GM12878 (cell line): ENCODE measurements at regions of chr7 and their contacts with region 1.

Region 1: DNA sequence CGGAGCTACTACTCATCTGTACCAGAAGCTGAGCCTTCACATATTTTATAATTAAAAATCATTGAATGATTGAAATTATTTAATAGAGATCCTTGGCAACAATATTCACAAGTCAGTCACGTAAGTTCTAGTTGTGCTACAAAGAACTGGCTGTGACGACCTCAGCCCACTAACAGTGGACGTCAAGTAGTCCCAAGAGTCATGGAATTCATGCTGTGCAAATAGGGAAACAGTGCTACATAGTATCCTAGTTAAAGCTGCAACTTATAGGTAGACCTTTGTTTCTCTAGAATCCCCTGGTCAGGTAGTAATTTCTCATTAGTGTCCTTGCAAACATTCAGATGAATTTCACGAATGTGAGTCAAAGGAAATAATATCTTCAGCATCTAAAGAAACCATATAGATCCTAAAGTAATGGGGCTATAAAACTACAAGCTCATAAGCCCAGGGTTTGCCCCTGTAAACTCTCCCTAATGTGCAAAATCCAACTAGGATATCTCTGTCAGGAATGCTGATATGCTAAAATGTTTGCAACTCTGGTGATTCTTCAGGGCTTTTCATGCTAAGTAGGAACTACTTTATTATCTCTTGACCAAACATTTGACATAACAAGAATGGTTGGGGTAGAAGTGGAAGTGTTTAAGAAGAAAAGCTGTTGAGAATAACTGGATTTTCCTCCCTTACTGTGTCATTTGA is 31.2 kb downstream of the CFAP69 start:
- DNase-seq: no peak
- ATAC-seq: no peak
- H3K4me3 ChIP-seq: no peak overlapping the region
- H3K27ac ChIP-seq: no peak overlapping the region
- H3K4me1 ChIP-seq: no peaks in the 10 kb centered on the region
- H3K27me3 ChIP-seq: no peaks in the 10 kb centered on the region
- CTCF ChIP-seq: no peak
- EP300 ChIP-seq: no peak
- POLR2A ChIP-seq: no peak
- RAD21 ChIP-seq: no peak

Region 2: GRCh38 chr7:90298145-90299038 is 22.2 kb after region 1 on chr7:
- CTCF ChIA-PET with region 1: interaction called, 10 read pairs
- POLR2A ChIA-PET with region 1: no interaction called
- RAD21 ChIA-PET with region 1: interaction called, 4 read pairs
- SMC1A ChIA-PET with region 1: interaction called, 16 read pairs
- in situ Hi-C with region 1: no loop called
- intact Hi-C with region 1: no loop called
- DNase-seq: no peak
- ATAC-seq: peak; percentile 98
- H3K4me3 ChIP-seq: no peak overlapping the region
- H3K27ac ChIP-seq: no peak overlapping the region
- H3K4me1 ChIP-seq: no peaks in the 10 kb centered on the region
- H3K27me3 ChIP-seq: no peaks in the 10 kb centered on the region; a peak in 1 of 4 replicates
- CTCF ChIP-seq: peak; percentile 58 to 72 (median 67)
- EP300 ChIP-seq: no peak
- POLR2A ChIP-seq: no peak
- RAD21 ChIP-seq: peak; percentile 56